PC-9 (cell line): ENCODE measurements at regions of chr2 and their contacts with region 1.

Region 1: GRCh38 chr2:38875576-38876367 is at the starts of genes DHX57 and MORN2:
- DNase-seq: peak; percentile 83
- H3K4me3 ChIP-seq: peak within 1 kb of the TSS; percentile 79
- H3K27ac ChIP-seq: peak within 1 kb of the TSS; percentile 26; the same call in 1 of the 2 replicates
- H3K4me1 ChIP-seq: peaks cover 11% of the 10 kb centered on the region
- H3K27me3 ChIP-seq: no peaks in the 10 kb centered on the region
- CTCF ChIP-seq: no peak
- total RNA-seq, gene DHX57: 20.8 and 28.1 TPM in 2 replicates
- total RNA-seq, gene MORN2: 16.7 and 22.9 TPM in 2 replicates

Region 2: DNA sequence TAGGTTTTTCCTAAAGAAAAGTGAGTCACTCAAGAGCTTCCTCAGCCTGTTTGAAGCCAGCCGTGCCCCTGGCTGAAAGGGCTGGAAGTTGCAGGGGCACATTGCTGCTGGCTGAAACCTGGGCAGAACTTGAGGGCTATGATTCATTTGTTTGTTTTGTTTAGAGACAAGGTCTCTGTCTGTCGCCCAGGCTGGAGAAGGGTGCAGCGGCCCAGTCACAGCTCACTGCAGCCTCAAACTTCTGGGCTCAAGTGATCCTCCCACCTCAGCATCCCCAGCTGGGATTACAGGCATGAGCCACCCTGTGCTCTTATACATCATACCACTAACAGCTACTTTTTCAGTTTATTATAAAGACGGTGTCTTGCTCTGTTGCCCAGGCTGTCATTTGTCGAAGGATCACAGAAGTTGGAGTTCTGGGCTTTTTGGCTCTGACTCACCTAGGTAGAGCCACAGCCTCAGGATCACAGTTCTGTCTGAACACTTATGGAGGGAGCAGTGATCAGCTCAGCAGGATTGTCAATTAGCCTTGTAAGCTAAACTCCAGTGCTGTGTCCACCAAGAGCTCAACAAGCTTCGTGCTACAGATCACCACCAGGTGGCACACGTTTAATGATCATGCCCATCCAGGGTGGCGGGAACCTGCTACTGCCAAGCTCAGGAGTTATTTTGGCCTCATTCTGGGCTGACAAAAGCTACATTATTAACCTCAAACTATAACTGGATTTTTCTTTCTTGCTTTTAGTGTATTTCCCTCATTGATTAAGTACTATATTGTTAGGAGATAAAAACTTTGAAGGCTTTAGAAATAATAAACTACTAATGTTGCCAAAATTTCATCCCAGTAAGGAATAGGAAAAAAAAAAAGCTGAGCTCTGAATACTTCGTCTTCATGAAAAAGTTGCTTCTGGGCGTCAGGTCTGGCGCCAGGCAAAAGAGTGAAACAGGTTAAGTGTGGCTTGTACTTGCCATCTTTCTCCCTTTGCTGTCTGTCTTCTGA is 71.8 kb after region 1 on chr2:
- CTCF ChIA-PET with region 1: interaction called, 6 read pairs
- POLR2A ChIA-PET with region 1: no interaction called
- intact Hi-C with region 1: loop called (anchors 1 kb)
- DNase-seq: peak; percentile 82 to 97
- H3K4me3 ChIP-seq: peak overlapping the region; percentile 21; the same call in 1 of the 2 replicates
- H3K27ac ChIP-seq: peak overlapping the region; percentile 63
- H3K4me1 ChIP-seq: peaks cover 21% of the 10 kb centered on the region
- H3K27me3 ChIP-seq: no peaks in the 10 kb centered on the region
- CTCF ChIP-seq: peak; percentile 88

Region 3: DNA sequence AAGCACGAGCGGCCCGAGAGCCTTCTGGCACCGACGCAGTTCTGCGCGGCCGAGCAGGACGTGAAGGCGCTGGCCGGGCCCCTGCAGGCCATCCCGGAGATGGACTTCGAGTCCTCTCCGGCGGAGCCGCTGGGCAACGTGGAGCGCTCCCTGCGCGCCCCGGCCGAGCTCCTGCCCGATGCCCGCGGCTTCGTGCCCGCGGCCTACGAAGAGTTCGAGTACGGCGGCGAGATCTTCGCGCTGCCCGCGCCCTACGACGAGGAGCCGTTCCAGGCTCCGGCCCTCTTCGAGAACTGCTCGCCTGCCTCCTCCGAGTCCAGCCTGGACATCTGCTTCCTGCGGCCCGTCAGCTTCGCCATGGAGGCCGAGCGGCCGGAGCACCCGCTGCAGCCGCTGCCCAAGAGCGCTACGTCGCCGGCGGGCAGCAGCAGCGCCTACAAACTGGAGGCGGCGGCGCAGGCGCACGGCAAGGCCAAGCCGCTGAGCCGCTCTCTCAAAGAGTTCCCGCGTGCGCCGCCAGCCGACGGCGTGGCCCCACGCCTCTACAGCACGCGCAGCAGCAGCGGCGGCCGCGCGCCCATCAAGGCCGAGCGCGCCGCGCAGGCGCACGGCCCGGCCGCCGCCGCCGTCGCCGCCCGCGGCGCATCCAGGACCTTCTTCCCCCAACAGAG is 84.3 kb after region 1 on chr2:
- CTCF ChIA-PET with region 1: no interaction called
- POLR2A ChIA-PET with region 1: no interaction called
- intact Hi-C with region 1: no loop called
- DNase-seq: peak in 1 of 2 experiments; percentile 64
- H3K4me3 ChIP-seq: no peak overlapping the region
- H3K27ac ChIP-seq: no peak overlapping the region
- H3K4me1 ChIP-seq: no peaks in the 10 kb centered on the region
- H3K27me3 ChIP-seq: no peaks in the 10 kb centered on the region
- CTCF ChIP-seq: no peak